Activated CD4-positive, alpha-beta T cell treated with anti-CD3 and anti-CD28 coated beads for 36 hours (primary cell): ENCODE measurements at regions of chr5 and their contacts with region 1.

Region 1: DNA sequence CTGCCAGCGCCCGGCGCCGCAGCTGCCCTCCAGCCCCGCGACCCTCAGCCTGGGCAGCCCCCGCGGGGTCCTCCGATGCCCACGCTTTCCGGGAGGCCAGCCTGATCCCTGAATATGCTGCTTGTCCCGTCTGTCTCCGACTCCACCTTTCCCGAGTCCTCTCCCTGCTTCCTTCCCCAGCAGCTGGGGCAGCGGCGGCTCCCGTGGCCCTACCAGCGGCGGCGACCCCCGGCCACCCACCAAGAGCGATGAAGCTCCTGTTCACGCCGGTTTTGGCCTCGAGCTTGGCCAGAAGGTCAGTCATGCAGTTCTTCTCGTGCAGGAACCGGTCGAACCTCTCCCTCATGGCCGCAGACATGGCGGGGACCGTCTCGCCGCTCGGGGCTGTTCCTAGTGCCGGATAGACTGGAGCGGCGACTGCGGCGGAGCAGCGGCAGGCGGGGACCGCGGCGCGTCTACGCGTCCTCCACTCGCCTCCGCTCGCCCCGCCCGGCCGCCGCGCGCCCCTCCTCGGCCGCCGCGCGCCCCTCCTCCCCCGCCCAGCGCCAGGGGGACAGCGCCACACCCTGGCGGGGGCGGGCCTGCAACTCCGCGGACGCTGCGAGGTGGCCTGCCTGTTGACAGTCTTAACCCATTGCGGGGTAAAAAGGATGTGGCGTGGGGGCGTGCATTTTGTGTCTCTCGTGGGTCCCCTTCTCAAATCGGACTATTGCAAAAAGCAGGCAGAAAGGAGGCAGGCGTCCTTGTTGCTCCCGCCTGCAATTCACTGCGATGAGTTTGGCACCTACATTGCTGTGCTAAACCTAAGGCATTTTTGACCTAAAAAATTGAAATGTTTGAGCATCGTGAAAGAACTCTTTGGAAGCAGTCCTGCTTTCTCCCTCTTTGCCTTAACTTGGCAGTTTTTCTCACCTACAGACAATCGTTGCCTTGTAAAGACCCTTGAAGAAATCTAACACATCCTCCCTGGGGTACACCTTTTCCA is at the start of gene REEP5:
- DNase-seq: peak; percentile 91
- ATAC-seq: peak; percentile 81
- H3K4me3 Mint-ChIP-seq: peak within 1 kb of the TSS; percentile 84
- H3K27ac Mint-ChIP-seq: peak within 1 kb of the TSS; percentile 95
- H3K4me1 Mint-ChIP-seq: peaks cover 55% of the 10 kb centered on the region
- H3K27me3 Mint-ChIP-seq: no peaks in the 10 kb centered on the region
- total RNA-seq, gene REEP5: 44.3 to 50.4 TPM

Region 2: GRCh38 chr5:112551419-112552032 is 370.6 kb before region 1 on chr5:
- CTCF ChIA-PET with region 1: no interaction called
- POLR2A ChIA-PET with region 1: no interaction called
- intact Hi-C with region 1: loop called (anchors 1 to 5 kb)
- DNase-seq: peak; percentile 37
- ATAC-seq: peak; percentile 47
- H3K4me3 Mint-ChIP-seq: no peak overlapping the region
- H3K27ac Mint-ChIP-seq: no peak overlapping the region
- H3K4me1 Mint-ChIP-seq: no peaks in the 10 kb centered on the region
- H3K27me3 Mint-ChIP-seq: no peaks in the 10 kb centered on the region

Region 3: GRCh38 chr5:112707187-112708102 is 214.7 kb before region 1 on chr5:
- CTCF ChIA-PET with region 1: no interaction called
- POLR2A ChIA-PET with region 1: no interaction called
- intact Hi-C with region 1: loop called in 1 of 2 experiments (anchors 1 kb)
- DNase-seq: peak; percentile 98
- ATAC-seq: peak; percentile 97
- H3K4me3 Mint-ChIP-seq: peak overlapping the region; percentile 83
- H3K27ac Mint-ChIP-seq: peak overlapping the region; percentile 90
- H3K4me1 Mint-ChIP-seq: peaks cover 54% of the 10 kb centered on the region
- H3K27me3 Mint-ChIP-seq: no peaks in the 10 kb centered on the region

Region 4: DNA sequence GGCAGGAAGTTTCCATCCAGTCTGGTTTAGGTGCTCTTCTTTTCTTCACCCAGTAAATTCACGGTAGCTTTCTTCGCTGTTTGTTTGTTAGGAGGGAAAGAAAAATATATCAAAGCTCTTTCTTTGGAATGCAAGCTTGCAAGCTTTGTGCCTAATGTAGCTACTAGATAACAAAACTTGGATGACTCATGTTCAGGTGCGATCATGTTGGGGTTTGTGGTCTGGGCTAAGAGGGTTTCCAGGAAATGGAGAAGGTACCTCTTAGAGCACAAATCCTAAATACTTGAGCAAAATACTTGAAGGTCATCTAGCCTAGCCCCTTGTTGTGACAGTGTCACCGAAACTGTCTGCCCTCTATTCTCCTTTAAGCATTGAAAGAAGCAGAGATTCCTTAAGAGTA is 43.4 kb before region 1 on chr5:
- CTCF ChIA-PET with region 1: interaction called, 10 read pairs
- POLR2A ChIA-PET with region 1: interaction called, 3 read pairs
- intact Hi-C with region 1: loop called (anchors 2 to 5 kb)
- DNase-seq: peak; percentile 76
- ATAC-seq: peak; percentile 93
- H3K4me3 Mint-ChIP-seq: peak overlapping the region; percentile 19
- H3K27ac Mint-ChIP-seq: peak overlapping the region; percentile 79
- H3K4me1 Mint-ChIP-seq: peaks cover 27% of the 10 kb centered on the region
- H3K27me3 Mint-ChIP-seq: no peaks in the 10 kb centered on the region

Region 5: DNA sequence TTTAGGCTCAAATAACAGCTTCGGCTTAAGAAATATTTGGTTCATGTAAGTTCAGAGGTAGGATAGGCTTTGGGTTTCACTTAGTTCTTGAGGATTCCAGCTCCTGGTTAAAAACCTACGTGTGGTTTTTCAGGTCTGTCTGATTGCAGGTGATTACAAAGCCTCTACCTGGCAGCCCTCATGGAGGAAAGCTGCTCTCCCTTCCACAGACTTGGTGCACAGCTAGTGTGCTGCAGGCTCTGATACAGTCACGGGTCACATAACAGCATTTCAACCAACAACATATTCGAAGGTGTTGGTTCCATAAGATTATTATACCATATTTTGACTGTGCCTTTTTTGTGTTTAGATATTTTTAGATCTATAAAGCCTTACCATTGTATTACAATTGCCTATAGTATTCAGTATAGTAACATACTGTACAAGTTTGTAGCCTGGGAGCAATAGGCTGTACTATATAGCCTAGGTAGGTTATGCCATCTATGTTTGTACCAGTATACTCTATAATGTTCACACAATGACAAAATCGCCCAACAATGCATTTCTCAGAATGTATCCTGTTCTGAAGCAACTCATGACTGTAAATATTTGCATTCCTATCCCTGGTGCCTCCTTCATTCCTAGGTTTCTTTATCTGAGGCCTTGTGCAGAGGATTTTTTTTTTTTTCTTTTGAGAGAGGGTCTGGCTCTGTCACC is 46.4 kb after region 1 on chr5:
- CTCF ChIA-PET with region 1: interaction called, 13 read pairs
- POLR2A ChIA-PET with region 1: no interaction called
- intact Hi-C with region 1: loop called (anchors 1 to 2 kb)
- DNase-seq: no peak
- ATAC-seq: no peak
- H3K4me3 Mint-ChIP-seq: no peak overlapping the region
- H3K27ac Mint-ChIP-seq: no peak overlapping the region
- H3K4me1 Mint-ChIP-seq: peaks cover 33% of the 10 kb centered on the region
- H3K27me3 Mint-ChIP-seq: no peaks in the 10 kb centered on the region

Region 6: GRCh38 chr5:113022661-113023060 is 100.5 kb after region 1 on chr5:
- CTCF ChIA-PET with region 1: no interaction called
- POLR2A ChIA-PET with region 1: interaction called, 3 read pairs
- intact Hi-C with region 1: loop called in 1 of 2 experiments (anchors 5 kb)
- DNase-seq: no peak
- ATAC-seq: peak; percentile 57
- H3K4me3 Mint-ChIP-seq: peak overlapping the region; percentile 10
- H3K27ac Mint-ChIP-seq: peak overlapping the region; percentile 38
- H3K4me1 Mint-ChIP-seq: peaks cover 64% of the 10 kb centered on the region
- H3K27me3 Mint-ChIP-seq: no peaks in the 10 kb centered on the region